ENCODE measurements at regions of chr3 and their contacts with region 1.

Region 1: DNA sequence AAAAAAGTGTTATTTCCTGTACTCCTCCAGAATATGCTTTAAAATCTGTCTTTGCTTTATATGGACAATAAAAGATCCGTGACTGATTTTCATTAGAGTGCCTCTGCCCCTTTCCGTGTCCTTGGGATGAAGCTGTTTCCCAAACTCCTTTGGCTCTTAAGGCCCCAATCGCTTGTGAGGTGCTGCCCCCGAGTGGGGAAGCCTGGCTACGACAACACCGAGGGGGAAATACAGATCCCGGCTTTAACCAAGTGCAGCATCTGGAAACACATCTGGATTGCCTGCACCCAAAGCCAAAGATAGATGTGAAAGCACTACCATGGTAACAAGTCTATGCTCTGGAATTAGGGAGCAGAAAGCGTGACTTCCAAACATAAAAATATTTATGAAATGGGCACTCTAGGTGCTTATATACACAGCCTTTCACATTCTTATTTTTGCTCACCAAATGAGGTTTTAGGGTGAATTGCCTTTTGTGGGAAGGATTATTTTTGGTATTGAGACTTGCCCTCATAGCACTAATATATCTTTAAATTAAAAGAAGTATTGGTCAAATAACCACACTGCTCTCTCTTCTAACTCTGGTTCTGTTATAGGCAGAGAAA is 40.6 kb upstream of the ADCY5 start:
- DNase-seq: peak; percentile 91

Region 2: GRCh38 chr3:122497425-122497824 is 992.1 kb before region 1 on chr3:
- intact Hi-C with region 1: no loop called
- DNase-seq: no peak

Region 3: GRCh38 chr3:123328851-123329635 is 160.5 kb before region 1 on chr3:
- intact Hi-C with region 1: loop called (anchors 2 to 5 kb)
- DNase-seq: peak; percentile 93

Region 4: DNA sequence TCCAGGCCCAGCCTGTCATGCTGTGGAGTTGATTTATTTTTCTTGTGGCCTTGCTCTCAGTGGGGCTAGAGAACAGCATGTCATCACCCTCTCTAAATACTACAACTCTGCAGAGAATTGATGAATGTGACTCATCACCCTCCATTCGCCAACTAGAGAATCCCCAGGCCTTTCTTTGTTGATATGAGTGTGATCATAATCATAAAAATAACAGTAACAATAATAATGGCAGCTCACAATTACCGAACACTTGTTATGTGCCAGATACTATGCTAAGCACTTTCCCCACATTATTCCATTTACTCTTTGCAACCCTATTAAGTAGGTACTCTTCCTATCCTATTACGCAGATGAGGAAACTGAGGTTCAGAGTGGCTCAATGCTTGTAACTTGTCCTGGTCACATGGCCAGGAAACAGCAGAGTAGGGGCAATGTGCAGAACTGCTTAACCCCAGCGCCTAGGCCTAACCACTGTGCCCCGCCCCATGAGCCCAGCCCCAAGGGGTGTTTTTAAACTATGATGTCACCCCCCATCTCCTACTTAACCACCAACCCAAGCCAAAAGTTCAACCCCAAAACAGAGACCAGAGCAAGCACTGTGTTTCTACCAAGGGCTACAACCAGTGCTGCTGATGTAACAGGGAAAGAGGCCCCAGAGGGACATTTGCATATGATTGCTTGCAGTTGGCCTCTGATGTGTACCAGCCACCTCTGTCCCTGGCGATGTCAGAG is 145.2 kb before region 1 on chr3:
- intact Hi-C with region 1: loop called in 1 of 2 experiments (anchors 5 kb)
- DNase-seq: peak; percentile 76

Region 5: DNA sequence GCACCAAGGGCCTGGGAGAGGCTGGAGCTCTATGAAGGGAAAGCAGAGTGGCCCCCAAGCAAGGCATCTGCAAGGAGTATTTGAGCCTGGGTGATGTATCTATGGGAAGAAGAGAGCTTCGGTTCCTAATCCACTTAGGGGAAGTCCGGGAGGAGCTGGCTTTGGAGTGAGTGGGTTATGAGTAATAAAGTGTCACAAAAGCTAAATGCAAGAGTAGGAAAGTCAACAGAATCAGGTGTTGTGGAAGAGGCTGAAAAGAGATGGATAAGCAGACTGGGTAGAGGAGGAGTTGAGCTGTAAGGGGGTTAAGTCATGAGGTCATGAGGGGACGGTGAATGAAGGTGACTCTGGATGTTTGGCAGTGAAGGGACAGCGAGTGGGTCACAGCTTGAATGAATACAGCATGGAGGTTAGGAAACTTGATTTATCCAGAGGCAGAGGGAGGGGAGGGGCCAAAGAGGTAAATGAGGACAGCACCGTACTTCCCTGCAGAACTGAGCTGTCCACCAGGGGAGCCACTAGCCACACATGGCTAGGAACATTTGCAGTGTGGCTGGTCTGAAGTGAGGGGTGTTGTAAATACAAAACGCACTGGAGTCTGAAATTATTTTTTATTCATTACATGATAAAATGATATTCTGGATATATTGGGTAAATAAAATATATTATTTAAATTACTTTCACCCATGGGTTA is 123.9 kb before region 1 on chr3:
- intact Hi-C with region 1: no loop called
- DNase-seq: peak; percentile 31

Region 6: DNA sequence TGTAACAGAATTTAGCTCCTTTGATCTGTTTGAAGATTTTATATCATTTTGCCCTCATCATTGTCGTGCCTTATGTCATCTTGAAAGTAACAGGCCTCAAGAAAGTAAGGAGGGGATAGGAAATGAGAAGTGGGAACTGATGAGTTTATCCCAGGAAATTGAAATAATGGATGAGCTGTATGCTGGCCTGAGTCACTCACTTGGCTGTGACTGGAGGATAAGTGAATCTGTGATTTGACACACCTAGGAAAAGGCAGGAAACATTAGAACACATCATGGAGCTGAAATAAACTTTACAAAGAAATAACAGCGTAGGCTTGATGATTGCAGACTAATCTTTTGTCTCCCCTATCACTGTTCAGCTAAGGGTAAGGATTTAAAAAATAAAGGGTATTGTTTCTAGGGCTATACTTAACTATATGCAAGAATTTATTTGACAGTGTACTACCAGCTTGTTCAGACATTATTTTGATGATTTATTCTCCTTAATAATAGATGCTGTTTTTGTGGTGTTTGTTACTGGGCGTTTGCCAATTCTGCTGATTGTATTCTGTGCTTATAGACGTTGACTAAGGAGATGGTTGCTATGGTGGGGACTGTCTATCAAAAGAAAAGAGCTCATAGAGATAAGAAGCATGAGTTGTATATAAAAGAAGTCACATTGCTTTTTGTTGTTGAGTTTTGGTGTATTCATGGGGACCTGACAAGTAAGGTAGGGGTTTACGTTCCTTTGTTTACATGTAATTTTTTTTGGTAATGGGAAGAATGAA is 608.0 kb after region 1 on chr3:
- intact Hi-C with region 1: no loop called
- DNase-seq: no peak